MCF 10A (cell line): ENCODE measurements at regions of chr5 and their contacts with region 1.

Region 1: GRCh38 chr5:135829681-135830383 is 4.6 kb upstream of the SLC25A48 start:
- DNase-seq: peak; percentile 83
- H3K4me3 Mint-ChIP-seq: no peak overlapping the region
- H3K27ac Mint-ChIP-seq: no peak overlapping the region
- H3K4me1 Mint-ChIP-seq: peaks cover 5% of the 10 kb centered on the region
- H3K27me3 Mint-ChIP-seq: peaks cover 50% of the 10 kb centered on the region
- CTCF ChIP-seq: peak; percentile 96

Region 2: GRCh38 chr5:135376961-135377624 is 452.7 kb before region 1 on chr5:
- CTCF ChIA-PET with region 1: no interaction called
- POLR2A ChIA-PET with region 1: no interaction called
- intact Hi-C with region 1: no loop called
- DNase-seq: no peak
- H3K4me3 Mint-ChIP-seq: no peak overlapping the region
- H3K27ac Mint-ChIP-seq: peak overlapping the region; percentile 62
- H3K4me1 Mint-ChIP-seq: peaks cover 33% of the 10 kb centered on the region
- H3K27me3 Mint-ChIP-seq: no peaks in the 10 kb centered on the region
- CTCF ChIP-seq: no peak

Region 3: GRCh38 chr5:135729321-135729786 is 100.5 kb before region 1 on chr5:
- CTCF ChIA-PET with region 1: interaction called, 54 read pairs
- POLR2A ChIA-PET with region 1: no interaction called
- intact Hi-C with region 1: loop called (anchors 1 kb)
- DNase-seq: peak; percentile 48
- H3K4me3 Mint-ChIP-seq: no peak overlapping the region
- H3K27ac Mint-ChIP-seq: no peak overlapping the region
- H3K4me1 Mint-ChIP-seq: no peaks in the 10 kb centered on the region
- H3K27me3 Mint-ChIP-seq: no peaks in the 10 kb centered on the region
- CTCF ChIP-seq: peak; percentile 53

Region 4: GRCh38 chr5:135739383-135739981 is 90.3 kb before region 1 on chr5:
- CTCF ChIA-PET with region 1: interaction called, 32 read pairs
- POLR2A ChIA-PET with region 1: no interaction called
- intact Hi-C with region 1: loop called (anchors 1 kb)
- DNase-seq: no peak
- H3K4me3 Mint-ChIP-seq: no peak overlapping the region
- H3K27ac Mint-ChIP-seq: peak overlapping the region; percentile 20
- H3K4me1 Mint-ChIP-seq: peaks cover 5% of the 10 kb centered on the region
- H3K27me3 Mint-ChIP-seq: peaks cover 22% of the 10 kb centered on the region
- CTCF ChIP-seq: no peak

Region 5: DNA sequence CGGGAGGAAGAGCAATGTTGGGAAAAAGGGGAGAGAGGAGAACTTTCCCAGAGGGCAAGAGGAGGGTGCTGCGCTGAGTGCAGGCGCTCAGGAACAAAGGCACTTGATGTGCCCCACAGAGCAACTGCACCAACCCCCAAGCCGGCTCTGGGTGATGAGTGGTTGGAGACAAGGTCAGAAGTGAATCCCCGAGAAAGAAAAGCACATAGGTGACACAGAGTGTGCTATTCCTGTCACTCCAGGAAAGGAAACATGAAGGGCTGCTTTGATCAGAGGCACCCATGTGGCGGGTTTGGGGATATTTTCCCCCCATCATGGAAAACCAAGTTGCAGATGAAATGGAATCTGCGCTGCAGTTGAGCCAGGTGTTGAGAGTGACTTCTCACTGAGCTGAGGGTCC is 16.1 kb before region 1 on chr5:
- CTCF ChIA-PET with region 1: interaction called, 78 read pairs
- POLR2A ChIA-PET with region 1: interaction called, 3 read pairs
- intact Hi-C with region 1: no loop called
- DNase-seq: no peak
- H3K4me3 Mint-ChIP-seq: no peak overlapping the region
- H3K27ac Mint-ChIP-seq: no peak overlapping the region
- H3K4me1 Mint-ChIP-seq: no peaks in the 10 kb centered on the region
- H3K27me3 Mint-ChIP-seq: peaks cover 33% of the 10 kb centered on the region
- CTCF ChIP-seq: no peak

Region 6: DNA sequence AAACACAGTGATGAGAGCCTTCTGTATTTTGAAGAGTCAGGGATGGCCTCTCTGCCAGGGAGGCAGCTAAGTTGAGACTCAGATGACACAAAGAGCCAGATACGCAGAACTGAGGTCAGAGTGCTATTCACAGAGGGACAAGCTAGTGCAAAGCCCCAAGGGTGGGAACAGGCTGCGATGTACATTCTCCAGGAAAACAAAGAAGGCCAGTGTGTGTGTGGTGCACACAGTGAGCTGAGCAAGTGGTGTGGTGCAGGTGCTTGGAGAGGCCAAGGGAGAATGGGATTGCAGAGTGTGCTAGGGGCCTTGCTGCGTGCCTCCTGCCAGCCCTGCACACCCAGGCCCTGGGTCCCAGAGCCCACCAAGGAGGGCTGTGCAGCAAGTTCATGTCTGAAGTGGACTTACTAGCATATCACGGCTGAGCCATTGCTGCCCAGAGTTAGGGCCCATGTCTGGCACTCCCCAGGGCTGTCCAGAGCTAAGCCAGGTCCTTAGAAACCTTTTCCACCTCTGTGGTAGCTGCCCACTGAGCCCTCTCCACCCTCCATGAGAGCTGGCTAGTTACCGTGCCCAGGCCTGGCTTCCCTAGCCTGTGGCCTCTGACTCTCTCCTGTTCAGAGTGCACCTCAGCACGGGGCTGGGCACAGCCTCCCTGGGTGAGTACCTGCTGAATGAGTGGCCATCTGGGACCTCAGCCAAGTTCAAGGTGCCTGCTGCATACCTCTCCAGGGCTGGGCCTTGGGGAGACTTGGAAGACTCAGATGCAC is 13.9 kb after region 1 on chr5:
- CTCF ChIA-PET with region 1: interaction called, 76 read pairs
- POLR2A ChIA-PET with region 1: no interaction called
- intact Hi-C with region 1: no loop called
- DNase-seq: peak; percentile 88
- H3K4me3 Mint-ChIP-seq: no peak overlapping the region
- H3K27ac Mint-ChIP-seq: no peak overlapping the region
- H3K4me1 Mint-ChIP-seq: no peaks in the 10 kb centered on the region
- H3K27me3 Mint-ChIP-seq: peaks cover 36% of the 10 kb centered on the region
- CTCF ChIP-seq: no peak

Region 7: GRCh38 chr5:135880278-135880677 is 50.4 kb after region 1 on chr5:
- CTCF ChIA-PET with region 1: interaction called, 11 read pairs
- POLR2A ChIA-PET with region 1: no interaction called
- intact Hi-C with region 1: no loop called
- DNase-seq: peak; percentile 45
- H3K4me3 Mint-ChIP-seq: no peak overlapping the region
- H3K27ac Mint-ChIP-seq: no peak overlapping the region
- H3K4me1 Mint-ChIP-seq: peaks cover 10% of the 10 kb centered on the region
- H3K27me3 Mint-ChIP-seq: peaks cover 32% of the 10 kb centered on the region
- CTCF ChIP-seq: peak; percentile 10

Region 8: DNA sequence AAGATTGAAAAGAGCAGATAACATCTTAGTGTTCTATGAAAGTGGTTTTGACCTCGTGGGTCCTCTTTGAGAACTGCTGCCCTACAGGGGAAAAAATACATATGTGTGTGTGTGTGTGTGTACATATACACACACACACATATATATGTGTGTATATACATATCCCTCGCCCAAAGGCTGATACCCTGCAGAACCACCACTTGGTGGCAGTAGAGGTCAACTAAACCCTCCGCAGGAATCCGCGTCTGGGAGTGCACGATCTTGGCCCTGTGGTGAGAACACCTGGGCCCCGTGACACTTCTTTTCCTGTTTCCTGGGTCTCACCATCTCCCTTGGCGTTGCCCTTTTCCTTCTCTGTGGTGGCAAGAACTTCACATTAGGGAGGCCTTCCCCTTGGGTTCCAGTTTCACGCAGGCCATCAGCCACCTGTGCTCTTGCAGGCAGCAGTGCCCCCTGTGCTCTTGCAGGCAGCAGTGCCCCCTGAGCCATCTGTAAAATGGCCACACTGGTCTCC is 57.6 kb after region 1 on chr5:
- CTCF ChIA-PET with region 1: interaction called, 12 read pairs
- POLR2A ChIA-PET with region 1: no interaction called
- intact Hi-C with region 1: no loop called
- DNase-seq: peak; percentile 90
- H3K4me3 Mint-ChIP-seq: no peak overlapping the region
- H3K27ac Mint-ChIP-seq: no peak overlapping the region
- H3K4me1 Mint-ChIP-seq: no peaks in the 10 kb centered on the region
- H3K27me3 Mint-ChIP-seq: peaks cover 37% of the 10 kb centered on the region
- CTCF ChIP-seq: peak; percentile 96

Region 9: GRCh38 chr5:137136991-137137632 is 1307.3 kb after region 1 on chr5:
- CTCF ChIA-PET with region 1: no interaction called
- POLR2A ChIA-PET with region 1: no interaction called
- intact Hi-C with region 1: no loop called
- DNase-seq: no peak
- H3K4me3 Mint-ChIP-seq: no peak overlapping the region
- H3K27ac Mint-ChIP-seq: no peak overlapping the region
- H3K4me1 Mint-ChIP-seq: peaks cover 11% of the 10 kb centered on the region
- H3K27me3 Mint-ChIP-seq: no peaks in the 10 kb centered on the region
- CTCF ChIP-seq: no peak